Tibial artery (tissue), 4 donors: ENCODE measurements at regions of chr1 and their contacts with region 1.

Region 1: DNA sequence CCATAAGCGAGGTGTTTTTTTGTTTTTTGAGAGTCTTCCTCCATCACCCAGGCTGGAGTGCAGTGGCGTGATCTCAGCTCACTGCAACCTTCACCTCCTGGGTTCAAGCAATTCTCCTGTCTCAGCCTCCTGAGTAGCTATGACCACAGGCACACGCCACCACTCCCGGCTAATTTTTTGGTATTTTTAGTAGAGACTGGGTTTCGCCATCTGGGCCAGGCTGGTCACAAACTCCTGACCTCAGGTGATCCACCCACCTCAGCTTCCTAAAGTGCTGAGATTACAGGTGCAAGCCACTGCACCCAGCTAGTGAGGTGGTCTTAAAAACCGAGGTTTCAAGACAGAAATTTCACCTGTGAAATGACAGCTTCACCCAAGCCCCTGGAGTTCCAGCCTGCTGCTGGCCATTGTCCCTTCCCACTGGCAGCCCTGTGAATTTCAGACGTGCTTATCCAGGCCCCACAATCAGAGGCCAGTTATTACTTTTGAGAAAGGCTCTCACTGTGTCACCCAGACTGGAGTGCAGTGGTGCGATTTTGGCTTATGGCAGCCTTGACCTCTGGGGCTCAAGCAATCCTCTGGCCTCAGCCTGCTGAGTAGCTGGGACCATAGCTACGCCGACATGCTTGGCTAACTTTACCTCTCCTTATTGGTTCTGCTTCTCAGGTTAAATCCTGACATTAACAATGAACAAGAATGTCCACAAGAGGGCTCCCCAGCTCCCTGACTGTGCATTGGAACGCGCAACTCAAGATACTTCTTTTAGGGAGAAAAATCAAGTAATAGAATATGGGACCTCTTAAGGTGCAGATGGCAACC is 19.4 kb downstream of the ENO1 start:
- DNase-seq: peak in 1 of 2 donors; percentile 41
- H3K4me3 ChIP-seq: no peak overlapping the region
- H3K27ac ChIP-seq: peak overlapping the region; percentile 29 to 55
- H3K4me1 ChIP-seq: peaks cover 0 to 31% (median 16%) of the 10 kb centered on the region in 4 donors
- H3K27me3 ChIP-seq: no peaks in the 10 kb centered on the region
- CTCF ChIP-seq: peak; percentile 70 to 72

Region 2: GRCh38 chr1:8987881-8988617 is 129.0 kb after region 1 on chr1:
- intact Hi-C with region 1: loop called (anchors 2 kb)
- DNase-seq: peak in 1 of 2 donors; percentile 72
- H3K4me3 ChIP-seq: no peak overlapping the region
- H3K27ac ChIP-seq: peak overlapping the region in 1 of 2 donors; percentile 38
- H3K4me1 ChIP-seq: peaks cover 0 to 26% (median 12%) of the 10 kb centered on the region in 4 donors
- H3K27me3 ChIP-seq: no peaks in the 10 kb centered on the region
- CTCF ChIP-seq: peak; percentile 86 to 94